CD8-positive, alpha-beta memory T cell (primary cell): ENCODE measurements at regions of chr9 and their contacts with region 1.

Region 1: GRCh38 chr9:134171316-134172197 is 7.2 kb upstream of the RNU6ATAC start:
- DNase-seq: no peak
- H3K4me3 ChIP-seq: no peak overlapping the region
- H3K4me3 Mint-ChIP-seq: no peak overlapping the region
- H3K27ac ChIP-seq: no peak overlapping the region
- H3K27ac Mint-ChIP-seq: peak overlapping the region in 1 of 8 donors; percentile 42
- H3K4me1 ChIP-seq: no peaks in the 10 kb centered on the region
- H3K4me1 Mint-ChIP-seq: peaks cover 0 to 2% (median under 1%) of the 10 kb centered on the region in 3 donors
- H3K27me3 ChIP-seq: no peaks in the 10 kb centered on the region
- H3K27me3 Mint-ChIP-seq: peaks cover 0 to 3% of the 10 kb centered on the region in 2 donors

Region 2: DNA sequence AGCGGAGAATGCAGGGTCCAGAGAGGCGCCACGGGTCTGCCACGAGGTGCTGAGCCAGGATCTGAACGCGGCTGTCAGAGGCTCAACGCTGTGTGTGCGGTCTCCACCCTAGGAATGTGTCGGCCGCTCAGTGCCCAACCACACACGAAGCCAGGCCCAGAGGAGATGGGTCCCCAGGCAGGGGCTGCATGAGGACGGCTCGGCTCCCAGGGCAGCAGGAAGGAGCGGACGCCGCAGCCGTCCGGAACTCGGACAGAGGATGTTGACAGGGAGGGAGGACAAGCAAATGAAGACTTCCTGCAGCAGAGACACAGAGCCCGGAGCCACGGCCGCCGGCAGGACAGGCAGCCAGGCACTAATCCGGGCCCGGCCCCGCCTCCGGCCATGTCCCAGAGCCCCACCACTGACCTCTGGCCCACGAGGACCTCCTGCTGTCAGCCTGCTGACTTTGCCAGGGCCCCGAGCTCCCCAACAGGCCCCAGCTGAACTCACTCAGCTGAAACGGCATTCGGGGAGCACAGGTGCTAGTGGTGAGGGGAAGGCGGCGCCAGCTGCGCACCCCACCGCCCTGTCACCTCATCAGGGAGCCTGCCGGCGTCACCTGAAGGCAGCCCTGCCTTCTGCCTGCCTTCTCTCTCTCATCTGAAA is 192.2 kb before region 1 on chr9:
- CTCF ChIA-PET with region 1: no interaction called
- POLR2A ChIA-PET with region 1: no interaction called
- DNase-seq: no peak
- H3K4me3 ChIP-seq: no peak overlapping the region
- H3K4me3 Mint-ChIP-seq: no peak overlapping the region
- H3K27ac ChIP-seq: no peak overlapping the region
- H3K27ac Mint-ChIP-seq: no peak overlapping the region
- H3K4me1 ChIP-seq: no peaks in the 10 kb centered on the region
- H3K4me1 Mint-ChIP-seq: no peaks in the 10 kb centered on the region
- H3K27me3 ChIP-seq: no peaks in the 10 kb centered on the region
- H3K27me3 Mint-ChIP-seq: peaks cover 0 to 4% of the 10 kb centered on the region in 2 donors

Region 3: DNA sequence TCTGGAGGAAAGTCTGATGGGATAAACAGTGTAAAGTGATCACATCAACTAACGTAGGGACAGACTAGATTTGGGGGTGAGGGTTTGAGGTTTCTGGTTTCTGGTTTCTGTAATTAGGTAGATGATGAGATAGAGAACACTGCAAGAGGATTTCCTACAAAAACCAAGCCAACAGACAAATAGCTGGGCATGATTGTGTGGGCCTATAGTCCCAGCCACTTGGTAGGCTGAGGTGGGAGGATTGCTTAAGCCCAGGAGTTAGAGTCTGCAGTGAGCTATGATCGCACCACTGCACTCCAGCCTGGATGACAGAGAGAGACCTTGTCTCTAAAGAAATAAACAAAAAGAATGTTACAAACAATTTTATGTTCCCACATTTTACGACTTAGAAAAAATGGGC is 27.2 kb after region 1 on chr9:
- CTCF ChIA-PET with region 1: interaction called, 13 read pairs
- POLR2A ChIA-PET with region 1: no interaction called
- DNase-seq: no peak
- H3K4me3 ChIP-seq: no peak overlapping the region
- H3K4me3 Mint-ChIP-seq: peak overlapping the region in 2 of 7 donors; percentile 2 to 33
- H3K27ac ChIP-seq: no peak overlapping the region
- H3K27ac Mint-ChIP-seq: peak overlapping the region in 2 of 8 donors; percentile 37 to 39
- H3K4me1 ChIP-seq: peaks cover 11% of the 10 kb centered on the region
- H3K4me1 Mint-ChIP-seq: peaks cover 25 to 29% (median 28%) of the 10 kb centered on the region in 3 donors
- H3K27me3 ChIP-seq: peaks cover 4% of the 10 kb centered on the region
- H3K27me3 Mint-ChIP-seq: peaks cover 0 to 2% of the 10 kb centered on the region in 2 donors

Region 4: GRCh38 chr9:134325048-134325816 is 153.7 kb after region 1 on chr9:
- CTCF ChIA-PET with region 1: interaction called, 10 read pairs
- POLR2A ChIA-PET with region 1: no interaction called
- DNase-seq: peak in 3 of 5 donors; percentile 24 to 53 (median 30)
- H3K4me3 ChIP-seq: peak overlapping the region; percentile 86
- H3K4me3 Mint-ChIP-seq: peak overlapping the region; percentile 72 to 83 (median 76)
- H3K27ac ChIP-seq: peak overlapping the region; percentile 59
- H3K27ac Mint-ChIP-seq: peak overlapping the region in 2 of 8 donors; percentile 41 to 61
- H3K4me1 ChIP-seq: peaks cover 19% of the 10 kb centered on the region
- H3K4me1 Mint-ChIP-seq: peaks cover 6 to 23% (median 9%) of the 10 kb centered on the region in 3 donors
- H3K27me3 ChIP-seq: no peaks in the 10 kb centered on the region
- H3K27me3 Mint-ChIP-seq: peaks cover 0 to 4% of the 10 kb centered on the region in 2 donors

Region 5: GRCh38 chr9:134371731-134372130 is 200.2 kb after region 1 on chr9:
- CTCF ChIA-PET with region 1: no interaction called
- POLR2A ChIA-PET with region 1: no interaction called
- DNase-seq: no peak
- H3K4me3 ChIP-seq: no peak overlapping the region
- H3K4me3 Mint-ChIP-seq: no peak overlapping the region
- H3K27ac ChIP-seq: no peak overlapping the region
- H3K27ac Mint-ChIP-seq: peak overlapping the region in 1 of 8 donors; percentile 29
- H3K4me1 ChIP-seq: no peaks in the 10 kb centered on the region
- H3K4me1 Mint-ChIP-seq: peaks cover 5 to 16% (median 7%) of the 10 kb centered on the region in 3 donors
- H3K27me3 ChIP-seq: no peaks in the 10 kb centered on the region
- H3K27me3 Mint-ChIP-seq: no peaks in the 10 kb centered on the region

Region 6: GRCh38 chr9:134443168-134444037 is 271.8 kb after region 1 on chr9:
- CTCF ChIA-PET with region 1: interaction called, 47 read pairs
- POLR2A ChIA-PET with region 1: interaction called, 5 read pairs
- DNase-seq: peak; percentile 82 to 93 (median 83)
- H3K4me3 ChIP-seq: no peak overlapping the region
- H3K4me3 Mint-ChIP-seq: peak overlapping the region in 2 of 7 donors; percentile 36 to 46
- H3K27ac ChIP-seq: no peak overlapping the region
- H3K27ac Mint-ChIP-seq: peak overlapping the region; percentile 15 to 85 (median 68)
- H3K4me1 ChIP-seq: peaks cover 7% of the 10 kb centered on the region
- H3K4me1 Mint-ChIP-seq: peaks cover 13 to 14% (median 14%) of the 10 kb centered on the region in 3 donors
- H3K27me3 ChIP-seq: peaks cover 5% of the 10 kb centered on the region
- H3K27me3 Mint-ChIP-seq: peaks cover 3 to 7% of the 10 kb centered on the region in 2 donors

Region 7: GRCh38 chr9:134449221-134449894 is 277.8 kb after region 1 on chr9:
- CTCF ChIA-PET with region 1: interaction called, 13 read pairs
- POLR2A ChIA-PET with region 1: no interaction called
- DNase-seq: peak; percentile 67 to 89 (median 81)
- H3K4me3 ChIP-seq: no peak overlapping the region
- H3K4me3 Mint-ChIP-seq: no peak overlapping the region
- H3K27ac ChIP-seq: no peak overlapping the region
- H3K27ac Mint-ChIP-seq: peak overlapping the region in 6 of 8 donors; percentile 15 to 80 (median 52)
- H3K4me1 ChIP-seq: no peaks in the 10 kb centered on the region
- H3K4me1 Mint-ChIP-seq: peaks cover 11 to 13% (median 12%) of the 10 kb centered on the region in 3 donors
- H3K27me3 ChIP-seq: no peaks in the 10 kb centered on the region
- H3K27me3 Mint-ChIP-seq: peaks cover 0 to 4% of the 10 kb centered on the region in 2 donors

Region 8: DNA sequence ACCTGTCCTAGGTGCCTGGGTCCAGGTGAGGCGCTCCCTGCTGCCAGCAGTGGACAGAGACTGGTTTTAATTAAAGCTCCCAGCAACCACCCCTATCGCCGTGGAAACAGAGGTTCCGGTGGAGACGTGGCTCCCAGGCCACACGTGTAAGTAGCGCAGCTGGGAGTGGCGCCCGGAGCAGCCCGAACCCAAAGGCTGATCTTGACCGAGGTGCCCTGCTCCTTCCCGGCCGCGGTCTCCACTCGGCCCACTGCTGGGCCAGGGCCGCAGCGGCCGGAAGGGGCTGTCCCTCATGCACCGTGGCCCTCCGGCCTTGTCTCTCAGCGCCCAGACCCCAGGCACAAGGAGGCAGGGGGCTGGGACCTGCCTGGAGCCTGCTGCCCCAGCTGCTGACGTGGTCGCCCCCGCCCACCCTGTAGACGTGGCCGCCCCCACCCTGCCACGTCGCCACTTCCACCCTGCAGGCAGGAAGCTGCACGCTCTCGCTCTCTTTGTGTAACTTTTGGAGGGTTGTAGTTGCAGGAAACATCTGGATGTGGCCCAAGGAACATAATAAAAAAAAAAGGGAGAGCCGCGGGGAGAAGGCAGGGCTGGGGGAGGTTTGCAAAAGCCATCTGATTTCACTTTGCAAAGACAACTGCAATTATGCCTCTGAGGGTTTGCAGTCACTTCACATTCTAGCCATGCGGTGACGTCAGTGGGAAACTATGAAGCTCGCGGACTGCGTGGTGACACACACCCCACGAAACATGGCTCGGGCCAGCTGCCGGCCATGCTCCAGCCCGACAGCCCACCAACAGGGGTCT is 284.6 kb after region 1 on chr9:
- CTCF ChIA-PET with region 1: interaction called, 14 read pairs
- POLR2A ChIA-PET with region 1: no interaction called
- DNase-seq: peak; percentile 57 to 85 (median 80)
- H3K4me3 ChIP-seq: peak overlapping the region; percentile 67
- H3K4me3 Mint-ChIP-seq: peak overlapping the region; percentile 66 to 94 (median 85)
- H3K27ac ChIP-seq: peak overlapping the region; percentile 49
- H3K27ac Mint-ChIP-seq: peak overlapping the region; percentile 71 to 98 (median 96)
- H3K4me1 ChIP-seq: peaks cover 20% of the 10 kb centered on the region
- H3K4me1 Mint-ChIP-seq: peaks cover 7 to 12% (median 8%) of the 10 kb centered on the region in 3 donors
- H3K27me3 ChIP-seq: no peaks in the 10 kb centered on the region
- H3K27me3 Mint-ChIP-seq: no peaks in the 10 kb centered on the region